PC-9 (cell line): ENCODE measurements at regions of chr7 and their contacts with region 1.

Region 1: GRCh38 chr7:106176414-106177299 is 64.5 kb upstream of the SYPL1 start:
- DNase-seq: peak in 1 of 2 experiments; percentile 88
- H3K4me3 ChIP-seq: no peak overlapping the region
- H3K27ac ChIP-seq: no peak overlapping the region
- H3K4me1 ChIP-seq: peaks cover 10% of the 10 kb centered on the region
- H3K27me3 ChIP-seq: no peaks in the 10 kb centered on the region
- CTCF ChIP-seq: peak; percentile 93

Region 2: DNA sequence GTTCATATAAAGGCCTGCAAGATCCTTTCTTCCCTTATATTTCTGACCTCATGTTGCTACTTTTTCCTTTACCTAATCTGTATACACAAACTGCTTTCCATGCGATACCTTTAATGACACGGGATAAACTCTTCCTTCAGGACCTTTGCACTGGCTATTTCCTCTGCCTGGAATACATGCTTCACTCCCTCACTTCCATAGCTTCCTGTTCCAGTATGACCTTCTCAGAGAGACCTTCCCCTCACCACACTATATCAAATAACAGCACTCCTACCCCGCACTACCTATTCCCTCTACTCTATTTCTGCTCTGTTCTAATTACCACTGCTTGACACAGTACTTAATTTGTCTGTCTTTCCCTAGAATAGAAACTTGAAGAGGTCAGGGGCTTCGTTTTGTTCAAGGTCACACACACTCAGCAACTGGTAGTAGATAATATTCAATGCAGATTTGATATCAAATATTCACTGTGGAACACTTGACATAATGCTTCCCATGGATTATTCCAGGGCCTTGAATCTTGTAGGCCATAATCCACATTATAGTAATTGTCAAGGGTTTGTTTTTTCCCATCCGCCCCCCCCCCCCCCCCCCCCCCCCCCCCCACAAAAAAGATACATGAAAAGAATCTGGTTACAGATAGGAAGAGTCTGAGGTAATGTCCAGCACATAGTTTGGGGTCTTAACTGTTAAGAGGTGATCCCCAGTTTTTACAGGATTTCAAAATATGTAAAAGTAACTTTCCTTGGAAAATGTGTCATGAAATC is 75.6 kb before region 1 on chr7:
- CTCF ChIA-PET with region 1: no interaction called
- POLR2A ChIA-PET with region 1: no interaction called
- intact Hi-C with region 1: no loop called
- DNase-seq: no peak
- H3K4me3 ChIP-seq: no peak overlapping the region
- H3K27ac ChIP-seq: no peak overlapping the region
- H3K4me1 ChIP-seq: no peaks in the 10 kb centered on the region
- H3K27me3 ChIP-seq: no peaks in the 10 kb centered on the region
- CTCF ChIP-seq: no peak

Region 3: DNA sequence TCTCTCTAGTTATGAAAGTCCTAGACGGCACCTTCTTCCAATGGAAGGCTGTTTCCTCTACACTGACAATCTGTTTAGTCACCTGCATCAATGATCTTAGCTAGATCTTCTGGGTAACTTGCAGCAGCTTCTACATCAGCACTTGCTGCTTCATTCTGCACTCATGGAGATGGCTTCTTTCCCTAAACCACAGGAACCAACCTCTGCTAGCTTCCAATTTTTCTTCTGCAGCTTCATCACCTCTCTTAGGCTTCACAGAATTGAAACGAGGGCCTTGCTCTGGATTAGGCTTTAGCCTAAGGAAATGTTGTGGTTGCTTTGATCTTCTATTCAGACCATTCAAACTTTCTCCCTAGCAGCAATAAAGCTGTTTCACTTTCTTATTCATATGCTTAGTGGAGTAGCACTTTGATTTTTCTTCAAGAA is 83.5 kb after region 1 on chr7:
- CTCF ChIA-PET with region 1: interaction called, 8 read pairs
- POLR2A ChIA-PET with region 1: no interaction called
- intact Hi-C with region 1: loop called (anchors 5 kb)
- DNase-seq: no peak
- H3K4me3 ChIP-seq: no peak overlapping the region
- H3K27ac ChIP-seq: 0 out of 2 replicates have a peak overlapping the region, but pooled peaks have one; percentile 6
- H3K4me1 ChIP-seq: no peaks in the 10 kb centered on the region
- H3K27me3 ChIP-seq: no peaks in the 10 kb centered on the region
- CTCF ChIP-seq: no peak

Region 4: GRCh38 chr7:106461993-106462859 is 285.6 kb after region 1 on chr7:
- CTCF ChIA-PET with region 1: interaction called, 19 read pairs
- POLR2A ChIA-PET with region 1: interaction called, 4 read pairs
- intact Hi-C with region 1: loop called (anchors 1 kb)
- DNase-seq: peak; percentile 33 to 50
- H3K4me3 ChIP-seq: no peak overlapping the region
- H3K27ac ChIP-seq: peak overlapping the region; percentile 88
- H3K4me1 ChIP-seq: peaks cover 40% of the 10 kb centered on the region
- H3K27me3 ChIP-seq: no peaks in the 10 kb centered on the region
- CTCF ChIP-seq: peak; percentile 74

Region 5: DNA sequence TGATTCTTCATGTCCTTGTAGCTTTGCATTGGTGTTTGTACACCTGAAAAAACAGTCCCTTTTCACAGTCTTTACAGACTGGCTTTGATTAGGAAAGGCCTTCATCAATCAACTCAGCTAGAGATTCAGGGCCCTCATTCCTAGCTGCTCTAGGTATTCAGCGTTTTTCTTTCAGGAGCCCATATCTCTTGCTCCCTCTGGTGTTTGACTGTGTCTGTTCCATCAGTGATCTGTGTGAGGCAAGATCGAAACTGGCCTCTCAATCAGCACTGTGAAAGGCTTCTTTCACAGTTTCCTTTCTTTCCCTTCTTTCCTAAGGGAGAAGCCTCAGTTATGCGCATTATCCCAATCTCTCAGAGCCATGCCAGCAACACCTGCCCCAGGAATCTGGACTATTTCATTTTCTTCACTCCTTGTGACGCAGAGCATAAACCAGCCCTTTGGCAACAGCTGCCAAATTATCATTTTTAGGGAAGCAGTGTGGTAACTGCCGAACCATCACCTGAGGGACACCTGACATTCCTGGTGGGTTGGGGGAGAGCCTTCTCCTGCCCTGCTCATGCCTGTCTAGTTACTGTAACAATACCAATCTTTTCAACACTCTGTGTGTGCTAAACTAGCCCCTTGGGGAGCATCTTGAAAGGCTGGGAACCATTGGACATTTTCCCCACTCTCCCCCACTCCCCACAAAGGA is 560.0 kb after region 1 on chr7:
- CTCF ChIA-PET with region 1: interaction called, 7 read pairs
- POLR2A ChIA-PET with region 1: interaction called, 5 read pairs
- intact Hi-C with region 1: loop called (anchors 1 kb)
- DNase-seq: peak; percentile 33 to 58
- H3K4me3 ChIP-seq: no peak overlapping the region
- H3K27ac ChIP-seq: peak overlapping the region; percentile 2
- H3K4me1 ChIP-seq: no peaks in the 10 kb centered on the region
- H3K27me3 ChIP-seq: no peaks in the 10 kb centered on the region
- CTCF ChIP-seq: peak; percentile 66

Region 6: GRCh38 chr7:107168233-107169119 is 991.8 kb after region 1 on chr7 and contains the start of gene HBP1:
- CTCF ChIA-PET with region 1: no interaction called
- POLR2A ChIA-PET with region 1: no interaction called
- intact Hi-C with region 1: loop called (anchors 5 kb)
- DNase-seq: peak; percentile 99
- H3K4me3 ChIP-seq: peak within 1 kb of the TSS; percentile 77
- H3K27ac ChIP-seq: peak within 1 kb of the TSS; percentile 86
- H3K4me1 ChIP-seq: peaks cover 26% of the 10 kb centered on the region
- H3K27me3 ChIP-seq: no peaks in the 10 kb centered on the region
- CTCF ChIP-seq: no peak
- total RNA-seq, gene HBP1: 60.0 and 62.1 TPM in 2 replicates